ENCODE measurements at regions of chr21 and their contacts with region 1.

Region 1: DNA sequence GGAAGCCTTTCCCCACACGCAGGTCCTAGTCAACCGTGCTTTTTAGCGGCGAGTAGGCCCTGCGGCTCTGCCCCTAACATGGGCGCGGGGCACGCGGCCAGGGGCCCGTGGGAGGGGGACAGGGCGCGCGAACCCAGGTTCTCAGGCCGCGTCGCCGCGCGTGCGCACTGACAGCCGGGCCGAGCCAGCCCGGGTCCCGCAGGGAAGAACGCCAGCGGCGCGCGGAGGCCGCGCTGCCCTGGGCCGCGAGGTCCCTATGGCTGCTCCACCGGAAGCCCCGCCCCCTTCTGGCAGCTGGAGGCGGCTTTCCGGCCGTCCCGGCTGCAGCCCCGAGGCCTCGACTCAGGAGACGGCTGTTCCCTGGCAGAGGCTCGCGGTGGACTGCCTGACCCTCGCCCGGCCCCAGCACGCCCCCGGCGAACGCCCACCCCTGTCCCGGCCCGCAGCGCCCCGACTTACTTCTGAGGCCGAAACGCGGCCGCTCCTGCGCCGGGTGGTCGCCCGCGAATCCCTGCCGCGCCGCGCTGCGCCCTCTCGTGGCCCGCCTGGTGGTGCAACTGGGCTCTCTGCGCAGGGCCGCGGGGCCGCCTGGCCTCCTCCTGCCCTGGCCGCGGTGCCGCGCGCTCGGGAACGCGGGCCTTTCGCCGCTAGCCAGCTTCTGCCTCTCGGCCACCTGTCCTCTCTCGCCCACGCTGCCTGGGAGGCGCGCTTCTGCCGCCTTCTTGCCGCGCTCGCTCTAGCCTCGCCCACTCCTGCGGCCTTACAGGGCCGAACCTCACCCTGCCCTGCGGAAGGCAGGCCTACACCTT is 16.6 kb upstream of the RIPPLY3 start:
- DNase-seq: peak; percentile 87 to 91
- ATAC-seq: peak; percentile 93 to 96
- H3K4me3 ChIP-seq: peak overlapping the region; percentile 46
- H3K27ac ChIP-seq: peak overlapping the region; percentile 80 to 96
- H3K4me1 ChIP-seq: peaks cover 15% of the 10 kb centered on the region
- CTCF ChIP-seq: peak; percentile 72
- EP300 ChIP-seq: no peak
- POLR2A ChIP-seq: peak; percentile 50
- RAD21 ChIP-seq: peak in 1 of 2 experiments; percentile 29; a peak in 1 of 5 replicates

Region 2: DNA sequence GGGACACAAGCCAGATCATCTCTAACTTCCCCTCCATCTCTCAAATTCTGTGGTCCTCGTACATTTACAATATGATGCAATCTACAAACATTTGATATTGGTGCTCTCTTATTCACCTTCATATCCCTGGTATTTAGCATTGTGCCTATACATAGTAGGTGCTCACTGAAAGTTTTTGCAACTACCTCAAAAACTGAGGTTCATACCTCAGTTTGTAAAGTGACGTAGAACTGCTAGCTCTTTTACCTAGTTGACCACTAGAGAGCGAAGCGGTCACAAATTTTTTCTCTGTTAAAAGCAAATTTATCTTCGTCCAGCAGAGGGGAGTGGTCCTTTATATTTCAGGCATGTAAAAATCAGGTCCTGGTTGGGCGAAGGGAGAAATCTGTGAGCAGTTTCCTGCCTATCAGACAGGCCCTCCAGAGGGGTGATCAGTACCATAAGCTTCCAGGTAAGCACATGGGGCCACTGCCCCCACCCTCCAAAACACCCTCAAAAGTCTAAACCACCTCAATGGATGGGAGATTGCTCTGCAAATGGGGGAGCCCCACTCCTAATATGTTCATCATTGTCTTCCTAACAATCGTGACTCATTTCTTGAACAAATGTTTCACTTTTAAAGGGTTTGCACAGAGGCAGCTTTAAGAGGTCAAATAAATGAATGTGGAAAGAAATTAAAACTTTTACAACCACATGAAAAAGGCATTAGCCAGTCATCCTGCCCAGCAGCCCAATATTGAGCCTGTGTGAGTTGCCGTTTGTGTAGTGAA is 12.8 kb before region 1 on chr21:
- CTCF ChIA-PET with region 1: interaction called, 23 read pairs
- POLR2A ChIA-PET with region 1: interaction called, 11 read pairs
- DNase-seq: peak; percentile 23 to 84
- ATAC-seq: peak; percentile 82 to 88
- H3K4me3 ChIP-seq: no peak overlapping the region
- H3K27ac ChIP-seq: peak overlapping the region; percentile 10 to 69; a peak in 3 of 6 replicates
- H3K4me1 ChIP-seq: peaks cover 9% of the 10 kb centered on the region; the same call in 1 of the 3 replicates
- CTCF ChIP-seq: peak; percentile 83
- EP300 ChIP-seq: no peak
- POLR2A ChIP-seq: no peak
- RAD21 ChIP-seq: peak; percentile 71 to 79

Region 3: DNA sequence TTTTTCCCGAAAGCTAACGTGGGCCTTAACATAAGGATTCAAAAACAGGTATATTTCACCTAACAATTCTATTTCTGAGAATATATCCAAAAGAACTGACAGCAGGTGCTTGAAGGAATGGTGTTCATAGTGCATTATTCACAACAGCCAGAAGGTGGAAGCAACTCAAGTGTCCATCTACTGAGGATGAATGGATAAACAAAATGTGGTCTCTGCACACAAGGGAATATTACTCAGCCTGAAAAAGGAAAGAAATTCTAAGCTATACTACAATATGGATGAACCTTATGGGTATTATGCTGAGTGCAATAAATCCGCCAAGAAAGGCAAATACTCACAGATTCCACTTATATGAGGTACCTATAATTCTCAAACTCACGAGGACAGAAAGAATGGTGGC is 10.5 kb after region 1 on chr21:
- CTCF ChIA-PET with region 1: interaction called, 10 read pairs
- POLR2A ChIA-PET with region 1: interaction called, 3 read pairs
- DNase-seq: peak in 1 of 2 experiments; percentile 38
- ATAC-seq: peak in 1 of 2 experiments; percentile 60; a peak in 2 of 6 replicates
- H3K4me3 ChIP-seq: no peak overlapping the region
- H3K27ac ChIP-seq: no peak overlapping the region
- H3K4me1 ChIP-seq: no peaks in the 10 kb centered on the region
- CTCF ChIP-seq: peak; percentile 4; the same call in 1 of the 3 replicates
- EP300 ChIP-seq: no peak
- POLR2A ChIP-seq: no peak
- RAD21 ChIP-seq: peak in 1 of 2 experiments; percentile 11; a peak in 1 of 5 replicates

Region 4: GRCh38 chr21:37267269-37268184 is 277.6 kb after region 1 on chr21 and contains the start of gene VPS26C:
- CTCF ChIA-PET with region 1: no interaction called
- POLR2A ChIA-PET with region 1: no interaction called
- DNase-seq: peak; percentile 58 to 98
- ATAC-seq: peak; percentile 95
- H3K4me3 ChIP-seq: peak within 1 kb of the TSS; percentile 69
- H3K27ac ChIP-seq: peak within 1 kb of the TSS; percentile 91 to 96
- H3K4me1 ChIP-seq: peaks cover 8% of the 10 kb centered on the region; the same call in 1 of the 3 replicates
- CTCF ChIP-seq: no peak
- EP300 ChIP-seq: no peak
- POLR2A ChIP-seq: peak; percentile 45; the same call in 1 of the 2 replicates
- RAD21 ChIP-seq: no peak; a peak in 1 of 5 replicates
- polyA plus RNA-seq, gene VPS26C: 29.5 and 32.0 TPM in 2 replicates

Measured in A549 (cell line).